ENCODE measurements at regions of chr19 and their contacts with region 1.

Region 1: GRCh38 chr19:42283143-42284065 is 14.4 kb downstream of the CIC start:
- DNase-seq: peak; percentile 98
- ATAC-seq: peak; percentile 69
- H3K4me3 Mint-ChIP-seq: no peak overlapping the region
- H3K27ac Mint-ChIP-seq: no peak overlapping the region
- H3K4me1 Mint-ChIP-seq: peaks cover 45% of the 10 kb centered on the region
- H3K27me3 Mint-ChIP-seq: no peaks in the 10 kb centered on the region

Region 2: DNA sequence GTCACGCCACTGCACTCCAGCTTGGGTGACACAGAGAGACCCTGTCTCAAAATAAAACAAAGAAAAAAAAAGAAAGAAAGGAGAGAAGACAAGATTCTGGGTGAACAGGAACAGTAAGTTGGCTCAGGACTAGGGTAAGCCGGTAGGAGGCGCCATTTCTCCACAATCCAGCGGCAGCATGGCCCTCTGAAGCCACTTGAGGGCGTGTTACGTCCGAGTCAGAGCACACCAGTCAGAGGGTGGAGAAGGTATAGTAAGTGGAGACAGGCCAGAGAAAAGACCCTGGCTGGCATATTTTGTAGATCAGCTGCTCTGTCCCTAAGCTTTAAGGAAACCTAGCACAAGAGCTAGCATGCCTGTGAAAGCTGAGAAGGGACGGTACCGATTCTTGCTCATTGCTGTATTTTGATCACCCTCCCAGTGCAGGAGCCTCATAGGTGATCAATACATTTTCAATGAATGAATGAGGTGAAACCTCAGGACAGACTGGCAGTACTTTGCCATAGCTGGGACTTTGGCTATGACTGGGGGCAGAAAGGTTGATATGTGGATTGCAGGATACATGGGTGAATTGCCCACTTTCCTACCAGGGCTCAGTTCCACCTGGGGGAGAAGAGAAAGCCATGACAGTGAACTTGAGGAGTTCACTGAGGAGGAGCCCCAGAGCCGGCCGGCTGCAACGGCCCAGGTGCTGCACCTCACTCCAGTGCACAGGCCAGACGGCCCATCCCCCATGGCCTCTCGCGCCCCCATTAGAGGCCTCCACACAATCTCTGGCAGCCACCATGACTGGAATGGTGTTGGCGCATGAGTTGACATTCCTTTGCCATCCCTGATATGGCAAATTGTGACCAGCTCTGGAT is 174.6 kb before region 1 on chr19:
- CTCF ChIA-PET with region 1: interaction called, 12 read pairs
- POLR2A ChIA-PET with region 1: no interaction called
- DNase-seq: peak; percentile 94
- ATAC-seq: peak; percentile 94
- H3K4me3 Mint-ChIP-seq: no peak overlapping the region
- H3K27ac Mint-ChIP-seq: peak overlapping the region; percentile 26
- H3K4me1 Mint-ChIP-seq: peaks cover 33% of the 10 kb centered on the region
- H3K27me3 Mint-ChIP-seq: no peaks in the 10 kb centered on the region

Region 3: DNA sequence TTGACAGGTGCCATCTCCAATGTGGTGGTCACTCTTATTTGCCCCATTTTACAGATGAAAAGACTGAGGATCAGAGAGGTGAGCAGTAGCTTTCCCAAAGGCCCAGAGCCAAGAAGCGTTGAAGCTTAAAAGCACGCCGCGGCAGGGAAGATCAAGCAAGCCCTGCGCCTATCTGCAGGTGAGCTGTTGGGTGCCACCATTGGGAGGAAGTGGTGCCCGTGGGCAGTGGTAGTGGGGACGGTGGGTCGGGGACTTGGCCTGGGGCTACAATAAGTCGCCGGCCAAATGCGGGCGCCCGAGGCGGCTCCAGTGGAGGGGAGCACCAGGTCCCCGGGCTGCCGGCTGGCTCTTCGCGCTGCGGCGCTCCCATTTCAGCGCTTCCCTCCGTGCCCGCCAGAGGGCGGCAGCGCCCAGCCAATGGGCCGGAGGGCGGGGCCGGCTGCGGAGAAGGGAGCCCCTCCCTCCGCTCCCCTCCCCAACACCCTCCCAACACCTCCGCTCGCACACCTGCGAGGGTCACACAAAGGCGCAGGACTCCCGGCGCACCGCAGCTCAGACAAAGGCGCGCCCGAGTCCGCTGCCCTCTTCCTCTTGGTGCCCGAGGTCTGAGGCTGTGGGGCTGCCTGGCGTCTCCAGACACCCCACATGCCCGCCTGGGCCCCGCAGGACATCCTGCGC is 150.4 kb before region 1 on chr19:
- CTCF ChIA-PET with region 1: interaction called, 36 read pairs
- POLR2A ChIA-PET with region 1: interaction called, 3 read pairs
- DNase-seq: peak; percentile 82
- ATAC-seq: peak; percentile 71
- H3K4me3 Mint-ChIP-seq: peak overlapping the region; percentile 86
- H3K27ac Mint-ChIP-seq: peak overlapping the region; percentile 65
- H3K4me1 Mint-ChIP-seq: peaks cover 65% of the 10 kb centered on the region
- H3K27me3 Mint-ChIP-seq: no peaks in the 10 kb centered on the region

Region 4: DNA sequence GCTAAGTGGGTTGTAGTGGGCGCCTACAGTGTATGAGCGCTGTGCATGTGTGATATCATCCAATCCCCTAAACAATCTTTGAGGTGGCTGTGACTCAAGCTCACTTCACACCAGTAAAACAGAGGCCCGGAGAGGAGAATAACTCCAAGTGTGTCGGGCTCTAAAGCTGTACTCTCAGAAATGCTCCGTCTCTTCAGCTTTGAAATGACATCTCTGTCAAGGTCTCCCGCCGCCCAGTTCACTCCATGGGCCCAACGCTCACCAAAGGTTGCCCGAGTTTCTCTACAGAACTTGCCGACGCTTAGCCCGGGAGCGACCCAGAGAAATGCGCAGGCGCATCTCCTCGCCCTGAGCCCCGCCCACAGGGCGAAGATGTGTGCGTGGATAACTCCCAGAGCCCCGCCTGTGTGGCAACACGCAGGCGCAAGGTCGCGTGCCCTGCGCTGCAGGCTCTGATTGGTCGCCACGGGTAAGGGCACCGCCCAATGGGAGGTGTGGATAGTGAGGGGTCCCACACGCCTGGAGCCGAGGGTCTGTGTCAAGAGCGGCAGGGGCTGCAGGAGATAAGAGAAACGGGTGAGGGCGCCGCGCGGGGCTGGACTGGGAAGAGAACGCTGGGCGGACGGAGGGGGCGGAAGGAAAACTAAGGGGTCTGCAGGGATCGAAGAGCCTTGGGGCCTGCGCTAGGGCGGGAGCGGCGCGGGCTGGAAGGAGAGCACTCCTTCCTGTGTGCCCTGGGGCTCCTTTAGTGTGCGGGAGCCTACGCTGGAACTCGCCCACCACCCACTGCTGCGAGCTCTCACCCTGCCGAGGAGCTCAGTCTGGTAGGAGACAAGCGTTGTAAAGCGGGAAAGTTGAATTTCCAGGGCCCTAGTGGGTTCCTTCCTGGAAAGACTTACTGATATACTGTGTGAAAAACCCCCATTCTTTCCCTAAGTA is 63.3 kb before region 1 on chr19 and contains the start of gene ZNF526:
- CTCF ChIA-PET with region 1: interaction called, 17 read pairs
- POLR2A ChIA-PET with region 1: interaction called, 7 read pairs
- DNase-seq: peak; percentile 98
- ATAC-seq: peak; percentile 90
- H3K4me3 Mint-ChIP-seq: peak within 1 kb of the TSS; percentile 92
- H3K27ac Mint-ChIP-seq: peak within 1 kb of the TSS; percentile 93
- H3K4me1 Mint-ChIP-seq: peaks cover 54% of the 10 kb centered on the region
- H3K27me3 Mint-ChIP-seq: no peaks in the 10 kb centered on the region
- total RNA-seq, gene ZNF526: 19.5 to 21.5 TPM

Region 5: DNA sequence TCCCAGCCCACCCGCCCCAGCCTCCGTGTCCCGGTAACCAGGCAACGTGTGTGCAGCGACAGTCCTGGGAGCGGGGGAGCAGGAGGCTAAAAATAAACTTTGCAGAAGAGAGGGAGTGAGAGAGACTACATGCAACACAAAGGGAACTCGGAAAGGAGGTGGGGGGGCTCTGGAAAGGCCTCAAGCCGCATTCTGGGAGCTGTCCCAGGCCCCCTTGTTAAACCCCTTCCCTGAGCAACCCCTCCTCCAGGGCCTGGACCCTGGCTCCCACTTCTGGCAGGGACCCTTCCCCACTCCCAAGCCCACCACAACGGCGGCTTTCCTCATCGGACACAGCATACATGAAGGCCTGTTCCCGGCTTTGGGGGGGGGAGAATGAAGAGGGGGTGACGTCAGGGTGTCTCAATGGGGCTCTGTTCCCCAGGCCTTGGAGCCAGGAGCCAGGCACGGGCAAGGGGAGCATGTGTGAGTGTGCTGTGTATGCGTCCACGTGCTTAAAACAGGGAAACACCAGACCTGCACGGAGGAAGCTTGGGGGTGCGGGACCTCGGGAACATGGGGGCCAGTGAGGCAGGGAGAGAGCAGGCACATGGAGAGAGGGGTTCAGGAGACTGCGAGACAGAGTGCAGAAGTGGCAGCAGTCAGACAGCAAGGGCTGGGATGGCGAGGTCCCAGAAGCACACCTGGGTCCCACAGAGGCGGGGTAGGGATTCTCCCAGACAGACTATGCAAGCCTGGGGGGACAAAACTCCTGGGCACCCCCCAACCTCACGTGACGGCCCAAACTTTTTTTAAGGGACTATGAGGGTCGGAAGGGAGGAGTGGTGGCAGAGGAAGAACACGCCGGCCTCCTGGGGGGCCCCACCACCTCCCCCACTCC is 30.8 kb before region 1 on chr19:
- CTCF ChIA-PET with region 1: interaction called, 113 read pairs
- POLR2A ChIA-PET with region 1: interaction called, 3 read pairs
- DNase-seq: no peak
- ATAC-seq: no peak
- H3K4me3 Mint-ChIP-seq: peak overlapping the region; percentile 84
- H3K27ac Mint-ChIP-seq: peak overlapping the region; percentile 89
- H3K4me1 Mint-ChIP-seq: peaks cover 36% of the 10 kb centered on the region
- H3K27me3 Mint-ChIP-seq: peaks cover 7% of the 10 kb centered on the region

Region 6: GRCh38 chr19:42295831-42296525 is 12.6 kb after region 1 on chr19:
- CTCF ChIA-PET with region 1: interaction called, 14 read pairs
- POLR2A ChIA-PET with region 1: interaction called, 4 read pairs
- DNase-seq: peak; percentile 92
- ATAC-seq: peak; percentile 86
- H3K4me3 Mint-ChIP-seq: no peak overlapping the region
- H3K27ac Mint-ChIP-seq: no peak overlapping the region
- H3K4me1 Mint-ChIP-seq: peaks cover 10% of the 10 kb centered on the region
- H3K27me3 Mint-ChIP-seq: no peaks in the 10 kb centered on the region

Measured in activated CD8-positive, alpha-beta T cell treated with anti-CD3 and anti-CD28 coated beads, Interleukin-2, amount 10 ng/mL, durations not matched to agents 7 days and 5 days (primary cell).